T-cell (primary cell): ENCODE measurements at regions of chr9 and their contacts with region 1.

Region 1: DNA sequence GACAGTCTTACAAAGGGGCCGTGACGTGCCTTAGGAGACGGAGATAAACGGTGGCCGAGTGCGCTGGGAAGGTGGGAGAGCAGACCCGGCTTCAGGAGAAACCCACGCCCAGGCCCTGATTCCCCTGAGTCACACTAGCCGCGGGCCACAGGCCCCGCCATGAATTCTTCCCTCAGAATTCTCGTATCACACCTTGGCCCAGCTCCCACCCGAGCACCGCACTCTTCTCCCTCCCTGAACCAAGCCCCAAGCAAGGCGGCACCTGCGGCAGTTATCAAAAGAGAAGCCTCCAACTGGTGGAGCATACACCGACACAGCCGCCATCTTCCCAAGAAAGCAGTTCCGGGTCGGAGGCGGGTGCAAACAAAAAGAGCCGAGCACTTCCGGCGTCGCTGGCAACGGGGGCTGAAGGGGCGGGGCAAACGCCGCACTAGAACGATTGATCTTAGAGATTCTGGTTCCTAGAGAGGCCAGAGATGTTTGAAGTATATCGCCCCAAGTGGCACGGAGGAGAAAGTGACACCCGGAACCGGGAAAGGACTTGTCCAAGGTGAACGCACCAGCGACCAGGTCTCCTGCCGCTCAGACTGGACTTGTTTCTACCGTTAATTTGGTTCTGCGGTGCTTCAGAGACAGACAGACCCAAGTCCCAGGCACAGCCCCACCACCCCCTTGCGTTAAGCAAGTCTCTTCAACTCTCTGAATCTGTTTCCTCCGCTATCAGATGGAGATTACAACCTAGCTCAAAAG is at the start of gene PSMB7:
- DNase-seq: peak; percentile 92 to 99 (median 96)
- ATAC-seq: peak; percentile 94 to 98 (median 96)
- H3K4me3 ChIP-seq: peak within 1 kb of the TSS; percentile 79 to 91
- H3K4me3 Mint-ChIP-seq: peak within 1 kb of the TSS; percentile 89 to 97 (median 97)
- H3K27ac ChIP-seq: peak within 1 kb of the TSS; percentile 56
- H3K27ac Mint-ChIP-seq: peak within 1 kb of the TSS; percentile 92 to 96
- H3K4me1 ChIP-seq: peaks cover 7 to 24% of the 10 kb centered on the region in 2 experiments
- H3K4me1 Mint-ChIP-seq: peaks cover 30 to 43% (median 40%) of the 10 kb centered on the region in 3 donors
- H3K27me3 ChIP-seq: no peaks in the 10 kb centered on the region
- H3K27me3 Mint-ChIP-seq: no peaks in the 10 kb centered on the region
- total RNA-seq, gene PSMB7: 62.6 to 75.8 (median 68.6) TPM

Region 2: GRCh38 chr9:124735121-124735520 is 319.8 kb after region 1 on chr9:
- CTCF ChIA-PET with region 1: interaction called in 1 of 2 experiments, 13 read pairs
- POLR2A ChIA-PET with region 1: no interaction called
- DNase-seq: no peak
- ATAC-seq: no peak
- H3K4me3 ChIP-seq: no peak overlapping the region
- H3K4me3 Mint-ChIP-seq: no peak overlapping the region
- H3K27ac ChIP-seq: no peak overlapping the region
- H3K27ac Mint-ChIP-seq: no peak overlapping the region
- H3K4me1 ChIP-seq: no peaks in the 10 kb centered on the region
- H3K4me1 Mint-ChIP-seq: no peaks in the 10 kb centered on the region
- H3K27me3 ChIP-seq: no peaks in the 10 kb centered on the region
- H3K27me3 Mint-ChIP-seq: peaks cover 7 to 11% of the 10 kb centered on the region in 2 donors